ENCODE measurements at regions of chr3 and their contacts with region 1.

Region 1: DNA sequence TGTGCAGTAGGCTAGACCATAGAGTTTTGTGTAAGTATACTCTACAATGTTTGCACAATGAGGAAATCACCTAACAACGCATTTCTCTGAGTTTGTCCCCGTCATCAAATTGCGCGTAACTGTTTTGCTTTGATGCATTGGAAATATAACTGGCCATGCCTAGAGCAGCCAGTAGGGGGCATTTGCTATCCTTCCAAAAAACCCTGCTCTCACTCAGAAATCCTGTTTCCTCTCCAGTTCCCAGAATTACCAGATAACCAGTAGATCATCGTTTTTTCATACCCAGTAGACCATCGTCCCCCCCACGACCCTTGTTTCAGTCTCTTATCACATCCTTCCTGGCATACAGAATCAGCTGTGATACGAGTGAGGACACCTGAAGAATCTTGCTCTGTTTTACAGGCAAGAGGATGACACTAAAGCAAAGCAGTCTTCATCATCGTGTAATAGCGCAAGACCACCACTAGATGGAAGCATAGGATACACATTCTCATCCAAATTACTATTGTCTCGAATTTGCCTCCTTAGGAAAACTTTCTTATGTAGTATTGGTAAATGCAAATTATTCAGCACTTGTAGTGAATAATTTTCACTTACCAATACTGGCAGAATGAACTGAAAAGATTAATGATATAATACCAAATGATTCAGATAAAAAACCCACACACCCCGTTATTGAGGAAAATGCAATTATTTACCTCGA is 4.4 kb upstream of the GABRR3 start:
- DNase-seq: peak; percentile 28
- ATAC-seq: peak; percentile 88

Region 2: DNA sequence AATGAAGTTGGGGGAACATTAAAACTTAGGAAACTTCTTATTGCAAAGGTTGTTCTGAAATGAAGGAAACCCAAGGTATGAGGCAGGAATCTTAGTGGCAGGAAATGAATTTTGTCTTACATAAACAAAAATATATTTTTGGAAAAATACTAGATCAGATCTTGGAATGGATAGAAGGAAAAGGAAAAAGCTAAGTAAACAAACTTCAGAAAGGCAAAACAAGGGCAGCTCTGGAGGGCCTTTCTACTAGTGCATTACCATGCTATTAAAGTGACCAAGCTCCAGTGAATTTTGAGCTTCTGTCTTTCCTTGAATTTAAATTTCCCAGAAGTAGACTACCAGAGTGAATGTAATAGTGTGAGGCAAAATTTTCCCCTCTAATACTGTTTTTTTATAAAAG is 261.3 kb before region 1 on chr3:
- intact Hi-C with region 1: no loop called
- DNase-seq: no peak
- ATAC-seq: no peak

Region 3: GRCh38 chr3:98329392-98330124 is 290.1 kb after region 1 on chr3:
- intact Hi-C with region 1: loop called (anchors 2 kb)
- DNase-seq: peak; percentile 28
- ATAC-seq: no peak

Measured in left ventricle myocardium superior (tissue), 1 donor.